Aorta (tissue), 5 donors: ENCODE measurements at regions of chr6 and their contacts with region 1.

Region 1: DNA sequence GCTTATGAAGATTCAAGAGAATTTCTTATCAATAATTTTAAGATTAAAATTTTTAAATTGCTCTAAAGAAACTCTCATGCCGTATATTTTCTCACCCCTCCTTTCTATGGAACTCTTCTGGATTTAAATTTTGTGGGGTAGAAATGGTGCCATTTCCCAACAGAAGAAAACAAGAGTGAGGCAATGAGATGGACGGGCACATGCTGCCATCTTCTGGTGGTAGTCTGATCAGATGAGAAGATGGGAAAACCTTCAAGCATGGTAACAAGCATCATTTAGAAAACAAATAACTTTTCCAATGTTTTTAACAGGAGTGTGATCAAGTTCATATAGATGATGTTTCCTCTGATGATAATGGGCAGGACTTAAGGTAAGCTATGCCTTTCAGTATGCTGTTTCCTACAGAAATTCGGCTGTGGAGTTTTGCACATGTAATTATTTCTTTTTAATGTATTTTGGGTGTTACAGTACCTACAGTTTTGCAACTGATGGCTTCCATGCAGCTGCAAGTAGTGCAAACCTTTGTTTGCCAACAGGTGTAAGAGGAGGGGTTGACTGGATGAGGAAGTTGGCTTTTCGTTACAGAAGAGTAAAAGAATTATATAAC is 271.4 kb downstream of the EYA4 start:
- DNase-seq: peak in 1 of 2 donors; percentile 51
- ATAC-seq: peak; percentile 65
- H3K4me3 ChIP-seq: no peak overlapping the region
- H3K27ac ChIP-seq: no peak overlapping the region
- H3K4me1 ChIP-seq: no peaks in the 10 kb centered on the region
- H3K27me3 ChIP-seq: no peaks in the 10 kb centered on the region

Region 2: DNA sequence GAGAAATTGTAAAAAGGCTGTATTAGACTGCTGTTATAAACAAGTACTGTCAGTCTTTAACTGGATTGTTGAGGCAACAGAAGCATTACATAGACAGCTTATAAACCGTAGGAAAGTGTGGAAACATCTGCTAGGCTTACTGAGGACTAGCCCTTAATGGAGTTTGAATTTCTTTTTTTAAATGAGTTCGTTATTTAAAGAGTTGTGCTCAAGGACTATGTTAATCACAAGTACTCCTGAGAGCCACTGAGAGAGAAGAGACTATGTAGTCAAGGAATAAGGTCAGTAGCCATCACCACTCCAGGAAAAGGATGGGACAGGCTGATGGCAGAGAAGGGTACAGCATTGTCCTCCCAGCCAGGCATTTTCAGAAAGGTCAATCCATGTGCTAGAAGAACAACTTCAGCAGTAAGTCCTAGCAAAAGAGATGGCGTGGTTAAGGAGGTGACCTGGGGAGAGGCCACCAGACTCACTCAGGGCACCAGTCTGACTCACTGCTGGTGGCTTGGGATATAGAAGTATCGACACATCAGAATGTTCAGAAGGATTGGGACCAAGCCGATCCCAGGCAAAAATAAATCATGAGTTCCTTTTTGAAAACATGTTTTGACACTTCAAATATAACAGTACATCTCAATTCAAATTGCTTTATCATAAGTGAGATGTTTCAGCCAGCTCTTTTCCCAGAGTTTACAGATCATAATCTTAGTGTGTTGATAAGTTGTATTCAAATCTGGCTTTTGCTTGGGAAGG is 691.7 kb before region 1 on chr6:
- intact Hi-C with region 1: loop called in 1 of 2 experiments (anchors 5 kb)
- DNase-seq: no peak
- ATAC-seq: no peak
- H3K4me3 ChIP-seq: no peak overlapping the region
- H3K27ac ChIP-seq: no peak overlapping the region
- H3K4me1 ChIP-seq: peaks cover 0 to 9% of the 10 kb centered on the region in 2 donors
- H3K27me3 ChIP-seq: no peaks in the 10 kb centered on the region

Region 3: GRCh38 chr6:132962936-132963868 is 549.3 kb before region 1 on chr6:
- intact Hi-C with region 1: loop called (anchors 2 to 5 kb)
- DNase-seq: peak; percentile 69 to 84
- ATAC-seq: peak; percentile 59
- H3K4me3 ChIP-seq: no peak overlapping the region
- H3K27ac ChIP-seq: no peak overlapping the region
- H3K4me1 ChIP-seq: peaks cover 0 to 2% of the 10 kb centered on the region in 2 donors
- H3K27me3 ChIP-seq: no peaks in the 10 kb centered on the region

Region 4: DNA sequence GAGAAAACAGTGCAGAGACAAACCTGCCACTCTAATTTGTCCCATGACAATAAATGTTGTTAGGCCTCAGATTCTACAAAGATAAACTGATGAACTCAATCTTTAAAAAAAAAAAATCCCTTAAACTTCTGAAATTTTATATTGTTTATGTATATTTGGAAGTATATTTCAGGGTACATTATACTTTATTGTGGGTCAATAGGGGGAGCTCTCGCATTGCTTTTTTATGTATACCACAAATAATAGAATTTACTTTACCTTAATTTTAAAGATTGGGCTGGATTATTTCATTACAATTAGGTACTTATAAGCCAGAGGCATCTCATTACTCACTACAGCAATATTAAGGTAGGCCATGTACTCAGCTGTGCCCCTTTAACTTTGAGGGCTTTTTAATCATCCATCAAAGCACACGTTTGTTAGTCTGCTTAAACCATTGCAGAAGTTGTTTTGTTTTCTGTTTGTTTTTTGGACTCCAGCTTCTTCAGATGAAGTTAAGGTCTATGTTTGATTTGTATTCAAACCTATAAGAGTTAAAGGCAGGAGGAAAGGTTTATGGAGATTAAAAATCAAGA is 327.6 kb before region 1 on chr6:
- intact Hi-C with region 1: loop called (anchors 5 kb)
- DNase-seq: no peak
- ATAC-seq: no peak
- H3K4me3 ChIP-seq: no peak overlapping the region
- H3K27ac ChIP-seq: no peak overlapping the region
- H3K4me1 ChIP-seq: no peaks in the 10 kb centered on the region
- H3K27me3 ChIP-seq: no peaks in the 10 kb centered on the region